Panc1 (cell line): ENCODE measurements at regions of chr16 and their contacts with region 1.

Region 1: DNA sequence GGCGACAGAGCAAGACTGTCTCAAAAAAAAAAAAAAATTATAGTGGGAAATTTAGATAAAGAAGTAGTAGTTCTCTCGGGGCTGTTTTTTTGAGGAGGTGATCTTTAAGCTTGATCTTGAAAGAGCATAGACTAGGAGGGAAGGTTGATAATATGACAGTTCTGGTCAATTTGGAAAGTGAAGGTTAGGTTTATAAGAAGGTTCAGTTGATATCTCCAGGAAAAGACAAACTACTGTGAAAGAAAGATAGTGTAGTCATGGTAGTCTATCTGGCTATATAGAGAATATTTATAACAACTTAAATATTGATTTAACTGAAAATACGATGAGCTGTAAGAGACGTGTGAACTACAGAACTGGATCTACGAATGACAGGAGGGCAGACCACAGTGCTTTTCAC is 3.1 kb downstream of the ATF7IP2 start:
- DNase-seq: no peak
- ATAC-seq: no peak
- H3K4me3 ChIP-seq: no peak overlapping the region
- H3K27ac ChIP-seq: peak overlapping the region; percentile 18; the same call in 1 of the 2 replicates
- H3K4me1 ChIP-seq: no peaks in the 10 kb centered on the region; the same call in 1 of the 2 replicates
- H3K27me3 ChIP-seq: no peaks in the 10 kb centered on the region
- CTCF ChIP-seq: no peak

Region 2: GRCh38 chr16:9134739-9135138 is 1254.2 kb before region 1 on chr16:
- CTCF ChIA-PET with region 1: no interaction called
- POLR2A ChIA-PET with region 1: interaction called, 12 read pairs
- in situ Hi-C with region 1: no loop called
- intact Hi-C with region 1: no loop called
- DNase-seq: no peak
- ATAC-seq: peak; percentile 81
- H3K4me3 ChIP-seq: no peak overlapping the region
- H3K27ac ChIP-seq: no peak overlapping the region
- H3K4me1 ChIP-seq: 0 out of 2 replicates have a peak, but pooled peaks cover 13% of the 10 kb centered on the region
- H3K27me3 ChIP-seq: no peaks in the 10 kb centered on the region
- CTCF ChIP-seq: peak; percentile 84

Region 3: GRCh38 chr16:10637337-10638039 is 248.5 kb after region 1 on chr16:
- CTCF ChIA-PET with region 1: no interaction called
- POLR2A ChIA-PET with region 1: no interaction called
- in situ Hi-C with region 1: no loop called
- intact Hi-C with region 1: no loop called
- DNase-seq: no peak
- ATAC-seq: no peak
- H3K4me3 ChIP-seq: no peak overlapping the region
- H3K27ac ChIP-seq: no peak overlapping the region
- H3K4me1 ChIP-seq: no peaks in the 10 kb centered on the region
- H3K27me3 ChIP-seq: no peaks in the 10 kb centered on the region
- CTCF ChIP-seq: no peak

Region 4: GRCh38 chr16:11629963-11630767 is 1241.2 kb after region 1 on chr16:
- CTCF ChIA-PET with region 1: no interaction called
- POLR2A ChIA-PET with region 1: interaction called, 11 read pairs
- in situ Hi-C with region 1: no loop called
- intact Hi-C with region 1: no loop called
- DNase-seq: no peak
- ATAC-seq: peak; percentile 40; the same call in 1 of the 2 replicates
- H3K4me3 ChIP-seq: no peak overlapping the region
- H3K27ac ChIP-seq: no peak overlapping the region
- H3K4me1 ChIP-seq: no peaks in the 10 kb centered on the region
- H3K27me3 ChIP-seq: no peaks in the 10 kb centered on the region
- CTCF ChIP-seq: no peak